ENCODE measurements at regions of chr13 and their contacts with region 1.

Region 1: DNA sequence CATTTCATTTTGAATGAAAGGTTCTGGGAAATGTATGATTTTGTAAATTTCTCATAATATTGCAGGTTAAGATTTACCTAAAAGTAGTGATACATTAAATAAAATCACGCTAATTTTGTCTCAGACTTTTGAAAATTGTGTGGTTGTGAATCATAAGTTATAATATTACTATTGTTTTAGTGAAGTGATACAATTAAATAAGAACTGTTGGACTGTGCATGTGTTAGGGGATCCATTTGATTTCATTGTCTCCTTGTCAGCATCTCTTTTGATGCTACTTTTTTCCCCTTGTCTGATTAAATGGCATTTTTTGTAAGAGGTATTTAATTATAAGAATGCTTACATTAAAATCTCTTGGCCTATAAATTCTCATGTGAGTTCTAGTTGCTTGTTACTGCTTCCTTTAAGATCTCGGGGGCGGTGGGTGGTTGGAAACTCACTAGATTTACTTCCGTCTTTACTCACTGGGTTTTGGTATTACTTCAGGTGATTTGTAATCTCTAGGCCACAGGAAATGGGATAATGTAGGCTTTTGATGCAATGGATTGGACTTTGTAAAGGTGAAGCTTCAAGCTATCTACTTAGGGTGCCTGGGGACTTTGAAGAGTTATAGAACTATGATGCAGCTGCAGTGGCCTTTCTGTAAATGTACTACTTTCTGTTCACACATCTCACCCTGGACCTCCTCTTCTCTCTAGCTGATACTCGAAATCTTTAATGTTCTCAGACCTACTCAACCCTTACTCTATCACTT is 66.5 kb downstream of the PAN3 start:
- DNase-seq: peak; percentile 81
- ATAC-seq: peak; percentile 95
- H3K4me3 Mint-ChIP-seq: no peak overlapping the region
- H3K27ac Mint-ChIP-seq: peak overlapping the region; percentile 59
- H3K4me1 Mint-ChIP-seq: peaks cover 37% of the 10 kb centered on the region
- H3K27me3 Mint-ChIP-seq: no peaks in the 10 kb centered on the region

Region 2: GRCh38 chr13:28147495-28147894 is 57.4 kb before region 1 on chr13:
- CTCF ChIA-PET with region 1: interaction called, 6 read pairs
- POLR2A ChIA-PET with region 1: interaction called, 3 read pairs
- intact Hi-C with region 1: loop called in 1 of 2 experiments (anchors 2 kb)
- DNase-seq: peak; percentile 17
- ATAC-seq: peak; percentile 84
- H3K4me3 Mint-ChIP-seq: no peak overlapping the region
- H3K27ac Mint-ChIP-seq: no peak overlapping the region
- H3K4me1 Mint-ChIP-seq: peaks cover 52% of the 10 kb centered on the region
- H3K27me3 Mint-ChIP-seq: no peaks in the 10 kb centered on the region

Region 3: DNA sequence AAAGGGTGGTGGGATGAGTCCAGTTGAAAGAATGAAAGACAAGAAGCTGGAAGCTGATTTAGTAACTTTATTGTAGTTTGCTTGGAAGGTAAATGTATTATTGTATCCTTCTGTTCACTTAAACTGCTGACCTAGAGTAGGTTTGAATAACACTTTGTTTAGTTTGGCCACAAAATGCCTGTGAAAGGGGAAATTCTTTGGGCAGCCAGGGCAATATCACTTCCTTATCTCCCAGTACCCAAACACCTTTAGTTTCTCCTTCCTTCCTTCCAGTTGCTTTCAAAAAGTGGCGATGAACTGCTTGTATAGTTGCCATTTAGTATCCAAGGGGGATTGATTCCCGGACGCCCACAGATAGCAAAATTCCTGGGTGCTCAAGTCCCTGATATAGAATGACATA is 53.5 kb after region 1 on chr13:
- CTCF ChIA-PET with region 1: no interaction called
- POLR2A ChIA-PET with region 1: no interaction called
- intact Hi-C with region 1: no loop called
- DNase-seq: no peak
- ATAC-seq: no peak
- H3K4me3 Mint-ChIP-seq: no peak overlapping the region
- H3K27ac Mint-ChIP-seq: no peak overlapping the region
- H3K4me1 Mint-ChIP-seq: peaks cover 2% of the 10 kb centered on the region
- H3K27me3 Mint-ChIP-seq: no peaks in the 10 kb centered on the region

Region 4: DNA sequence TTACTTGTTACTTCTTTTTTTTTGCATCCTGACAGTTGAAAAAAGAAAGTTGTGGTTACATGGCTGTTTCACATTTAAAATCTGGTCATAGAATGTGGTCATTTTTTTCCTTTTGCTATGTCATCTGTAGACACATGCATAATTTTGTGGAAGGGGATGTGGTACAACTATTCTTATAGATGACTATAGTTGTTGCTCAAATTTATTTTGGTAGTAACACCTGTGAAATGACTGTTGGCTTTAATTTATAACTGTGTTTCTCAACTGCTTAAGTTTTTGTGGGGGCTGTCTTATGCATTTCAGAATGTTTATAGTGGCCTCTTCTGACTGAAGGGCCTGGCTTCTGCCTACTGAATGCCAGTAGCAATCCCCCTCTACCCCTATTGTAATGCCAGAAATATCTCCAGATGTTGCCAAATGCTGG is 63.9 kb after region 1 on chr13:
- CTCF ChIA-PET with region 1: no interaction called
- POLR2A ChIA-PET with region 1: no interaction called
- intact Hi-C with region 1: loop called (anchors 1 to 2 kb)
- DNase-seq: no peak
- ATAC-seq: peak; percentile 90
- H3K4me3 Mint-ChIP-seq: no peak overlapping the region
- H3K27ac Mint-ChIP-seq: no peak overlapping the region
- H3K4me1 Mint-ChIP-seq: peaks cover 15% of the 10 kb centered on the region
- H3K27me3 Mint-ChIP-seq: no peaks in the 10 kb centered on the region